ENCODE measurements at regions of chr5 and their contacts with region 1.

Region 1: GRCh38 chr5:151239237-151239861 is 13.6 kb upstream of the GM2A start:
- DNase-seq: peak; percentile 93
- H3K4me3 ChIP-seq: peak overlapping the region in 3 of 4 donors; percentile 15 to 40 (median 40)
- H3K27ac ChIP-seq: peak overlapping the region; percentile 84 to 90 (median 86)
- H3K4me1 ChIP-seq: peaks cover 0 to 36% (median 33%) of the 10 kb centered on the region in 4 donors
- H3K27me3 ChIP-seq: no peaks in the 10 kb centered on the region
- CTCF ChIP-seq: peak; percentile 48 to 70 (median 57)
- EP300 ChIP-seq: no peak
- POLR2A ChIP-seq: no peak

Region 2: GRCh38 chr5:151051066-151051930 is 188.1 kb before region 1 on chr5:
- intact Hi-C with region 1: loop called (anchors 10 kb)
- DNase-seq: peak; percentile 92
- H3K4me3 ChIP-seq: no peak overlapping the region
- H3K27ac ChIP-seq: peak overlapping the region in 1 of 4 donors; percentile 9
- H3K4me1 ChIP-seq: peaks cover 0 to 8% (median 6%) of the 10 kb centered on the region in 4 donors
- H3K27me3 ChIP-seq: no peaks in the 10 kb centered on the region
- CTCF ChIP-seq: peak; percentile 84 to 96 (median 94)
- EP300 ChIP-seq: no peak
- POLR2A ChIP-seq: no peak

Region 3: DNA sequence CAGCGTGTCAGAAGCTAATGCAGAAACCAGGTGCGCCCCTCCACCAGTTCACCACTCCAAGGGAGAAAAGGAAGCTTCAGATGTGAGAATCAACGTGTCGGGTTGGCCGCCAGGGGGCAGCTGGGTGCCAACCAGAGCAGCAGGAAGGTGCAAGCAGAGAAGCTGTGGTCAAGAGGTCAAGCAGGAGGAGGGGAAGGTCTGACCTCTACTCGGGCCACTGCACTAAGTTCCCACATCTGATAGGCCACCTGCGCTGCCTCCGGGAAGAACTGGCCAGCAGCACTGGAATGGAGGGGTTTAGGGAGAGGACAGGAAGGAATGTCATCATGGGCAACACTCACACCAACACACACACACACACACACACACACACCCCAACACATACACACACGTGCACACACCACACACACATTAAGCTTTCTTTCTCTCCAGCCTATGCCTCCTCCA is 113.1 kb before region 1 on chr5:
- intact Hi-C with region 1: loop called (anchors 2 kb)
- DNase-seq: peak; percentile 86
- H3K4me3 ChIP-seq: no peak overlapping the region
- H3K27ac ChIP-seq: peak overlapping the region in 1 of 4 donors; percentile 67
- H3K4me1 ChIP-seq: peaks cover 0 to 21% (median 14%) of the 10 kb centered on the region in 4 donors
- H3K27me3 ChIP-seq: no peaks in the 10 kb centered on the region
- CTCF ChIP-seq: peak; percentile 75 to 93 (median 83)
- EP300 ChIP-seq: no peak
- POLR2A ChIP-seq: no peak

Region 4: GRCh38 chr5:151150471-151151262 is 88.7 kb before region 1 on chr5:
- intact Hi-C with region 1: loop called (anchors 5 kb)
- DNase-seq: peak; percentile 89
- H3K4me3 ChIP-seq: peak overlapping the region in 1 of 4 donors; percentile 6
- H3K27ac ChIP-seq: peak overlapping the region; percentile 88 to 97 (median 93)
- H3K4me1 ChIP-seq: peaks cover 4 to 99% (median 95%) of the 10 kb centered on the region in 4 donors
- H3K27me3 ChIP-seq: no peaks in the 10 kb centered on the region
- CTCF ChIP-seq: no peak
- EP300 ChIP-seq: peak in 1 of 4 donors; percentile 10
- POLR2A ChIP-seq: no peak

Region 5: GRCh38 chr5:151223469-151224264 is 15.7 kb before region 1 on chr5 and contains the start of gene CCDC69:
- intact Hi-C with region 1: loop called (anchors 1 kb)
- DNase-seq: peak; percentile 91
- H3K4me3 ChIP-seq: peak within 1 kb of the TSS; percentile 78 to 95 (median 87)
- H3K27ac ChIP-seq: peak within 1 kb of the TSS; percentile 90 to 99 (median 94)
- H3K4me1 ChIP-seq: peaks cover 0 to 53% (median 48%) of the 10 kb centered on the region in 4 donors
- H3K27me3 ChIP-seq: no peaks in the 10 kb centered on the region
- CTCF ChIP-seq: peak in 2 of 4 experiments; percentile 18 to 26
- EP300 ChIP-seq: peak in 1 of 4 donors; percentile 16
- POLR2A ChIP-seq: peak; percentile 88
- total RNA-seq, gene CCDC69: 199 to 342 (median 258) TPM

Measured in sigmoid colon (tissue), 7 donors.